Naive thymus-derived CD4-positive, alpha-beta T cell (primary cell): ENCODE measurements at regions of chr12 and their contacts with region 1.

Region 1: DNA sequence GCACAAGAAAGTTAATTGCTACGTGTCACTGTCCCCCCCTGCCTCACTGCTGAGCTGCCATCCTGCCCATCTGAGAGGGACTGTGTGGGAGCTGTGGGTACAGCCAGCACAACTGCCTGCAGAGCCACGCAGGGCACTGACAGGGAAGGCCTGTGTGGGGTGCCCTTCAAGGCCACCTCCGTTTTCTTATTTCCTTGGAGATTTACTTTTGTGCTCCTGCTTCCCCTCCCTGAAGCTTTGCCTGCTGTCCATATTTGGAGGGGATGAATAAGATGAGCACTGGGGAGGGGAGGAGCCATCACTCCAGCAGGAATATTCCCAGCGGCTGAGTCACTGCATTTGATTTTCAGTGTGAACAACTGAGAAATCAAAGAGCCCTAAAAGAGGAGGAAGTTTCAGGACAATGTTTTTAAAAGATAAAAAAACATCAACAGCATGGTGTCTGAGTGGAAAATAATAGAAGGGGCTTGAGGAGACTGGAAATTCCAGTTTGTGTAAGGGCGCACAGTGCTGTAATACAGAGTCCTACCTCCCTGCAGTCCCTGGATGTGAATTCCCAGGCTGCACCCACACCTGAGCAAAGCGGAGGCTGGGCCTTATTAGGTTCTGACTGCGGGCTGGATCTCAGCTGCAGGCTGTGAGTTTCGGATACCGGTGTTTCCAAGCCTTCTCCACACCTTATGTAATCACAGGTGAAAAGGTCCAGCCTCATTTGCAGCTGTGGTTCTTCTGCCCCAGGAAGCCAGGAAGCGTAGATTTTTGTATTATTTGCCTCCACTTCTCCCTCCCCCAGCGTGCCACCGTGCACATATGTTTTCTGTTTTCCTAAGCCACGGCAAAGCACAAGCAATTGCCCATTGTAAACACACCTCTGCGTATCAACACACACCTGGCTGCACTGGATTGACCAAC is 192.6 kb upstream of the BCL2L14 start:
- DNase-seq: no peak
- ATAC-seq: no peak
- H3K4me3 ChIP-seq: no peak overlapping the region
- H3K4me3 Mint-ChIP-seq: no peak overlapping the region
- H3K27ac ChIP-seq: no peak overlapping the region
- H3K27ac Mint-ChIP-seq: peak overlapping the region in 2 of 9 donors; percentile 58 to 79
- H3K4me1 ChIP-seq: peaks cover 0 to 20% of the 10 kb centered on the region in 2 donors
- H3K4me1 Mint-ChIP-seq: peaks cover 29 to 66% (median 52%) of the 10 kb centered on the region in 7 donors
- H3K27me3 ChIP-seq: no peaks in the 10 kb centered on the region
- H3K27me3 Mint-ChIP-seq: no peaks in the 10 kb centered on the region

Region 2: GRCh38 chr12:11839091-11839641 is 39.0 kb before region 1 on chr12:
- CTCF ChIA-PET with region 1: no interaction called
- POLR2A ChIA-PET with region 1: no interaction called
- intact Hi-C with region 1: no loop called
- DNase-seq: no peak
- ATAC-seq: peak; percentile 59
- H3K4me3 ChIP-seq: no peak overlapping the region
- H3K4me3 Mint-ChIP-seq: no peak overlapping the region
- H3K27ac ChIP-seq: no peak overlapping the region
- H3K27ac Mint-ChIP-seq: no peak overlapping the region
- H3K4me1 ChIP-seq: no peaks in the 10 kb centered on the region
- H3K4me1 Mint-ChIP-seq: peaks cover 8 to 37% (median 22%) of the 10 kb centered on the region in 7 donors
- H3K27me3 ChIP-seq: no peaks in the 10 kb centered on the region
- H3K27me3 Mint-ChIP-seq: no peaks in the 10 kb centered on the region

Region 3: DNA sequence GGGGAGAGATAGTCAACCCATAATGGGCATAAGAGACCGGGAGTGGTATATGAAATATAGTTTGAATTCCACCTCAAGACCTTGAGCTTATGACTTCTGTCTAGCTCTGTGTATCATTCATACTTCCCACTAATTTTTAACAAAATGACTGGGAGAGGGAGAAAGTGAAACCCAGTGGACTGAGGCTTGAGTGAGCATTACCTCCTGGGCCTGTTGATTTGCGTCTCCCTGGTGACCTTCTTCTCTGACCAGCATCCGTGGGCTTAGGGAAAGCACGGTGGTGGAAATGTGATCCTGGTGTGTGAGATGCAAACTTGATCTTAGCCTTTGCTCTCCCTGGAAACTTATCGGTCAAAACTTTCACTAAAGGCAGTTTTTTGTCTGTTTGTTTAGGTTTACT is 15.3 kb before region 1 on chr12:
- CTCF ChIA-PET with region 1: no interaction called
- POLR2A ChIA-PET with region 1: interaction called, 4 read pairs
- intact Hi-C with region 1: loop called in 1 of 2 experiments (anchors 2 kb)
- DNase-seq: no peak
- ATAC-seq: no peak
- H3K4me3 ChIP-seq: no peak overlapping the region
- H3K4me3 Mint-ChIP-seq: no peak overlapping the region
- H3K27ac ChIP-seq: no peak overlapping the region
- H3K27ac Mint-ChIP-seq: peak overlapping the region in 1 of 9 donors; percentile 66
- H3K4me1 ChIP-seq: no peaks in the 10 kb centered on the region
- H3K4me1 Mint-ChIP-seq: peaks cover 0 to 43% (median 3%) of the 10 kb centered on the region in 7 donors
- H3K27me3 ChIP-seq: no peaks in the 10 kb centered on the region
- H3K27me3 Mint-ChIP-seq: no peaks in the 10 kb centered on the region

Region 4: GRCh38 chr12:11891754-11892386 is 13.7 kb after region 1 on chr12:
- CTCF ChIA-PET with region 1: no interaction called
- POLR2A ChIA-PET with region 1: no interaction called
- intact Hi-C with region 1: loop called in 1 of 2 experiments (anchors 2 kb)
- DNase-seq: no peak
- ATAC-seq: no peak
- H3K4me3 ChIP-seq: no peak overlapping the region
- H3K4me3 Mint-ChIP-seq: no peak overlapping the region
- H3K27ac ChIP-seq: no peak overlapping the region
- H3K27ac Mint-ChIP-seq: peak overlapping the region in 3 of 9 donors; percentile 28 to 52 (median 35)
- H3K4me1 ChIP-seq: no peaks in the 10 kb centered on the region
- H3K4me1 Mint-ChIP-seq: peaks cover 10 to 46% (median 19%) of the 10 kb centered on the region in 7 donors
- H3K27me3 ChIP-seq: no peaks in the 10 kb centered on the region
- H3K27me3 Mint-ChIP-seq: no peaks in the 10 kb centered on the region

Region 5: GRCh38 chr12:12592930-12593329 is 714.8 kb after region 1 on chr12:
- CTCF ChIA-PET with region 1: no interaction called
- POLR2A ChIA-PET with region 1: no interaction called
- intact Hi-C with region 1: no loop called
- DNase-seq: no peak
- ATAC-seq: no peak
- H3K4me3 ChIP-seq: no peak overlapping the region
- H3K4me3 Mint-ChIP-seq: no peak overlapping the region
- H3K27ac ChIP-seq: no peak overlapping the region
- H3K27ac Mint-ChIP-seq: no peak overlapping the region
- H3K4me1 ChIP-seq: no peaks in the 10 kb centered on the region
- H3K4me1 Mint-ChIP-seq: peaks cover 0 to 4% (median 0%) of the 10 kb centered on the region in 7 donors
- H3K27me3 ChIP-seq: no peaks in the 10 kb centered on the region
- H3K27me3 Mint-ChIP-seq: peaks cover 0 to 14% (median 5%) of the 10 kb centered on the region in 5 donors